CD4-positive, alpha-beta memory T cell (primary cell): ENCODE measurements at regions of chr2 and their contacts with region 1.

Region 1: DNA sequence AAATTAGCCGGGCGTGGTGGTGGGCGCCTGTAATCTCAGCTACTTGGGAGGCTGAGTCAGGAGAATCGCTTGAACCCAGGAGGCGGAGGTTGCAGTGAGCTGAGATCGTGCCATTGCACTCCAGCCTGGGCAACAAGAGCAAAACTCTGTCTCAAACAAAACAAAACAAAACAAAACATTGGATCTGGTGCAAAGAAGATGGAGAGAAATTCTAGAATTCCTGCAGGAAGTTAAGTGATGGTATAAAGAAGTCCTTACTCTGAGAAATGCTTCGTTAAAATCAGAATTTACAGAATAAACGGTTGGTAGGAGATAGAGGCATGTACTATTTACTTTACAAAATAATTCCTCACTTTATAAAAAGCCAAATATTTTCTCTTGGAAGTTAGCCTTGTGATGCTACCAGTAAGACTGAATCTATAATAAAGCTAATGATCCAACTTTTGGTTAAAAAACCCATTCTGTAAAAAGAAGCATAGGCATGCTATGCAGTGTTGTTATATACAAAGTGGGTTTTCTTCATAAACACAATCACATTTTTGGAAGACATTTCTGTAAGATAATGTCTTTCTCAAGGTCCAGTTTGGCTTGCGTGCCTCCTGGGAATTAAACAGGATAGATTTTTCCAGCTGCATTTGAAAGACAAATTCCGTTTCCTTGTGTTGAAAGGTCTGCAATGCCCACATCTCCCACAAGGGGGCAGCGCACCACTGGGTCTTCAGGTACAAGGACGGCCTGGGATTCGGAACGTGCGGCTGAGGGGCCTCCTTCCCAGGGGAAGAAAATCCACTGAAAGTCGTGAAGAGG is 35.6 kb upstream of the PNO1 start:
- DNase-seq: peak; percentile 54 to 70 (median 60)
- H3K4me3 ChIP-seq: no peak overlapping the region
- H3K4me3 Mint-ChIP-seq: peak overlapping the region in 2 of 8 donors; percentile 56 to 63
- H3K27ac ChIP-seq: no peak overlapping the region
- H3K27ac Mint-ChIP-seq: no peak overlapping the region
- H3K4me1 ChIP-seq: peaks cover 5% of the 10 kb centered on the region
- H3K4me1 Mint-ChIP-seq: peaks cover 1 to 5% (median 5%) of the 10 kb centered on the region in 4 donors
- H3K27me3 ChIP-seq: no peaks in the 10 kb centered on the region
- H3K27me3 Mint-ChIP-seq: peaks cover 0 to 1% of the 10 kb centered on the region in 2 donors

Region 2: GRCh38 chr2:68157402-68158133 is 35.5 kb after region 1 on chr2 and contains the start of gene PNO1:
- CTCF ChIA-PET with region 1: interaction called, 11 read pairs
- POLR2A ChIA-PET with region 1: no interaction called
- intact Hi-C with region 1: no loop called
- DNase-seq: peak; percentile 97 to 98 (median 98)
- H3K4me3 ChIP-seq: peak within 1 kb of the TSS; percentile 82 to 97
- H3K4me3 Mint-ChIP-seq: peak within 1 kb of the TSS; percentile 95 to 99 (median 98)
- H3K27ac ChIP-seq: peak within 1 kb of the TSS; percentile 97
- H3K27ac Mint-ChIP-seq: peak within 1 kb of the TSS; percentile 99 to 100 (median 100)
- H3K4me1 ChIP-seq: peaks cover 40% of the 10 kb centered on the region
- H3K4me1 Mint-ChIP-seq: peaks cover 29 to 65% (median 45%) of the 10 kb centered on the region in 4 donors
- H3K27me3 ChIP-seq: no peaks in the 10 kb centered on the region
- H3K27me3 Mint-ChIP-seq: peaks cover 0 to 2% of the 10 kb centered on the region in 2 donors
- total RNA-seq, gene PNO1: 8.7 to 11.3 TPM

Region 3: DNA sequence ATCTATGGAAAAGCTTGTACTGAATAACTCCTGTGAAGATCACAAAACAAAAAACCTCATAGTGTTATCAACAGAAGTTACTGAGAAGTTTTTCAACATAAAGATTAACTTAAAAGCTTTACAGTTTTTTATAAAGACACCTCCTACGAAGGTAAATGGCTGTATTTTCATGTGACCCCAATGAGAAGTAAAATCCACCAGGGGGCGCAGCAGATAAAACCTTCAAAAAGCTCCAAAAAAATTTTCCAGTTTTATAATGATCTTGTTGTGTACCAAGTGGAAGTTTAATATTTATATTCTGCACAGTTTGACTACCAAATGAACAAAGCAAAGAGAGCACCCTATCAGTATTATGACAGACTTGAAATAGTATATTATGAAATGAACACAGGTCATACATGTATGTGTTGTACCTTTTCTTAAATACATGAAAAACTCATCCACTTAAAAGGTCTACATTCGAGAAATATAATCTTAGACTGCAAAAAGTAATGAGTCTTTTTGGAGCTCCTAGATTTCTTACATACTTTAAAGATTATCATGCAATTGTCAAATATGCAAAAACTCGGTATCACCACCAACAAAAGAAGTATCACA is 74.1 kb after region 1 on chr2:
- CTCF ChIA-PET with region 1: interaction called, 11 read pairs
- POLR2A ChIA-PET with region 1: no interaction called
- intact Hi-C with region 1: no loop called
- DNase-seq: peak in 4 of 5 donors; percentile 48 to 64 (median 57)
- H3K4me3 ChIP-seq: no peak overlapping the region
- H3K4me3 Mint-ChIP-seq: no peak overlapping the region
- H3K27ac ChIP-seq: no peak overlapping the region
- H3K27ac Mint-ChIP-seq: peak overlapping the region in 4 of 7 donors; percentile 38 to 91 (median 47)
- H3K4me1 ChIP-seq: peaks cover 47% of the 10 kb centered on the region
- H3K4me1 Mint-ChIP-seq: peaks cover 32 to 74% (median 51%) of the 10 kb centered on the region in 4 donors
- H3K27me3 ChIP-seq: no peaks in the 10 kb centered on the region
- H3K27me3 Mint-ChIP-seq: no peaks in the 10 kb centered on the region

Region 4: GRCh38 chr2:68238955-68239822 is 117.1 kb after region 1 on chr2:
- CTCF ChIA-PET with region 1: interaction called, 10 read pairs
- POLR2A ChIA-PET with region 1: no interaction called
- intact Hi-C with region 1: no loop called
- DNase-seq: no peak
- H3K4me3 ChIP-seq: no peak overlapping the region
- H3K4me3 Mint-ChIP-seq: peak overlapping the region in 7 of 8 donors; percentile 13 to 72 (median 63)
- H3K27ac ChIP-seq: no peak overlapping the region
- H3K27ac Mint-ChIP-seq: peak overlapping the region; percentile 5 to 87 (median 38)
- H3K4me1 ChIP-seq: peaks cover 95% of the 10 kb centered on the region
- H3K4me1 Mint-ChIP-seq: peaks cover 55 to 86% (median 71%) of the 10 kb centered on the region in 4 donors
- H3K27me3 ChIP-seq: no peaks in the 10 kb centered on the region
- H3K27me3 Mint-ChIP-seq: no peaks in the 10 kb centered on the region

Region 5: DNA sequence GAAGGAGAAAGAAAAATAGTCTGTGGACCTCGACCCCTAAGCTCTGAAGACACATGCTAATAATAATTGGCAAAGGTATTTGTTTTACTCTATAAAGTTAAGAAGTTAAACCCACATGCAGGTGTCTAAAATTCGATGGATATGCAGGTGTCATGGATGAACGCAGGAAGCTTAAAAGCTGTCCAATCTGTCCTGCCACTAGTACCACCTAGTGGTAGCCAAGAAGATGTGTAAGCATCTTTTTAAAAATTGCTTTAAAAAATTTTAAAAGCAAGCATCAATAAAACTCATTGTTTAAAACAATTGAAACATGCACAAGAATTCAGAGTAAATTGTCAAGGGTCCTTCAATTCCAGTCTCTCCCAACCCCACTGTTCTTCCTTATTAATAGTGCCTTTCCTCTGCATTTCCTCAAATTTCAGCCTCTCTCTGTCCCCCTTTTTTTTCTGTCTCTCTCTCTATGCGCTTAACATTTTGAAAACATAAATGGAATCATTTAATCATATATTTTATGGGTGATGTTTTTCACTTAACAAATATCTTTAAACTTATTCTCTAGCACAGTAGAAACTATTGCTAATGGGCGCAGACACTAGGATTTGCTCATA is 160.8 kb after region 1 on chr2:
- CTCF ChIA-PET with region 1: interaction called, 155 read pairs
- POLR2A ChIA-PET with region 1: no interaction called
- intact Hi-C with region 1: loop called (anchors 1 kb)
- DNase-seq: peak; percentile 38 to 51 (median 46)
- H3K4me3 ChIP-seq: no peak overlapping the region
- H3K4me3 Mint-ChIP-seq: no peak overlapping the region
- H3K27ac ChIP-seq: no peak overlapping the region
- H3K27ac Mint-ChIP-seq: no peak overlapping the region
- H3K4me1 ChIP-seq: peaks cover 5% of the 10 kb centered on the region
- H3K4me1 Mint-ChIP-seq: peaks cover 0 to 8% (median 0%) of the 10 kb centered on the region in 4 donors
- H3K27me3 ChIP-seq: peaks cover 7% of the 10 kb centered on the region
- H3K27me3 Mint-ChIP-seq: peaks cover 4 to 12% of the 10 kb centered on the region in 2 donors

Region 6: GRCh38 chr2:68362069-68362468 is 240.0 kb after region 1 on chr2:
- CTCF ChIA-PET with region 1: no interaction called
- POLR2A ChIA-PET with region 1: no interaction called
- intact Hi-C with region 1: loop called (anchors 1 kb)
- DNase-seq: peak; percentile 74 to 82 (median 77)
- H3K4me3 ChIP-seq: peak overlapping the region in 1 of 2 donors; percentile 11
- H3K4me3 Mint-ChIP-seq: peak overlapping the region; percentile 63 to 88 (median 79)
- H3K27ac ChIP-seq: no peak overlapping the region
- H3K27ac Mint-ChIP-seq: peak overlapping the region; percentile 38 to 88 (median 83)
- H3K4me1 ChIP-seq: peaks cover 11% of the 10 kb centered on the region
- H3K4me1 Mint-ChIP-seq: peaks cover 5 to 42% (median 19%) of the 10 kb centered on the region in 4 donors
- H3K27me3 ChIP-seq: no peaks in the 10 kb centered on the region
- H3K27me3 Mint-ChIP-seq: no peaks in the 10 kb centered on the region

Region 7: GRCh38 chr2:68901199-68901960 is 779.3 kb after region 1 on chr2:
- CTCF ChIA-PET with region 1: no interaction called
- POLR2A ChIA-PET with region 1: no interaction called
- intact Hi-C with region 1: no loop called
- DNase-seq: no peak
- H3K4me3 ChIP-seq: no peak overlapping the region
- H3K4me3 Mint-ChIP-seq: no peak overlapping the region
- H3K27ac ChIP-seq: no peak overlapping the region
- H3K27ac Mint-ChIP-seq: peak overlapping the region in 1 of 7 donors; percentile 17
- H3K4me1 ChIP-seq: peaks cover 1% of the 10 kb centered on the region
- H3K4me1 Mint-ChIP-seq: peaks cover 0 to 4% (median 2%) of the 10 kb centered on the region in 4 donors
- H3K27me3 ChIP-seq: no peaks in the 10 kb centered on the region
- H3K27me3 Mint-ChIP-seq: peaks cover 0 to 1% of the 10 kb centered on the region in 2 donors